ENCODE measurements at regions of chr19 and their contacts with region 1.

Region 1: DNA sequence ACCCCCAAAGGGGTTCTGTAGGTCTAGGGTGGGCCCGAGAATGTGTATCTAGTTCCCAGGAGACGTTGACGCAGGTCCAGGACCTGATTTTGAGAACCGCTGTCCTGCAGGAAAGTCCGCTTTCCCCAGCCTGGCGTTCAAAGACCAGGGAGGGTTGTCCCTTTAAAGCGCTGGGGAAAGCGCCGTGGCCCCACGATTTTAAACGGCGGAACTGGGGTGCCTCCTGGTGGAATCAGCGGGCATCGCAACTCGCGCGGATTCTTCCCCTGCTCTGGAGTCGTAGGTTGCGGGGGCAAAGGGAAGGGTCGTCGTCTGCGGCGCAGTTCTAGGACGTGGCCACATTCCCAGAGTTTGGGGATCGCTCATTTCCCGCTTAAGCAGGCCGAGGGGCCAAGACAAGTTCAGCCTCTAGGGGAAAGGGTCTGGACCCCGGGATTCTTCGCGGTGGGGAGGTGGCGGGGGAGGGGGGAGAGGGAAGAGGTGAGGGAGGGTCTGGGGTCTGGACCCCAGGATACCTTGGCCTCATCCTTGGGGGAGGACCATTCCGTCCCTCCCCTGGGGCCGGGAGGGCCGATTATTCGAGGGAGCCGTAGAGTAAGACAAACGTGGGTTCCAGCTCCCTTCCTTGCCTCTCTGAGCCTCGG is 7.7 kb downstream of the PNMA8B start:
- DNase-seq: peak; percentile 86
- CTCF ChIP-seq: peak; percentile 96

Region 2: DNA sequence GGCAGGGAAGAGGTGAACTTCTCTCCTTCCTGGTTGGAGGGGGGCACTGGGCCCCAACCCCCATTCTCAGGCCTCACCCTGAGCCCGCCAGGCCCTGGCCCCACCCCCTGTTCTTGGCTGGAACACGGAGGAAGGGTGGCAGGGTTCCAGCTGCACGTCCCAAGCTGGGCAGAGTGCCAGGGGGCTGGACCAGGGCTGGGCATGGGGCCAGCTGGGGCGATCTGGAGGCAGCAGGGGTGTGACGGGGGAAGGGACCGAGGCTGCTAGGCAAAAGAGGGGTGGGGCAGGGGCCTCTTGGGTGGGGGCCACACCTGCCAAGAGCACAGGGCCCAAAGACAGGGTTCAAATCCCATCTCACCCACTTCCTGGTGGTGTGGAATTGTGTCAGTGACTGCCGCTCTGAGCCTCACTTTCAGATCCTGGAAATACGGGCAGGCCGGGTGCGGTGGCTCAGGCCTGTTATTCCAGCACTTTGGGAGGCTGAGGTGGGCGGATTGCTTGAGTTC is 188.9 kb before region 1 on chr19:
- in situ Hi-C with region 1: loop called (anchors 25 kb)
- DNase-seq: no peak
- CTCF ChIP-seq: no peak

Region 3: GRCh38 chr19:46404055-46404752 is 83.7 kb before region 1 on chr19:
- in situ Hi-C with region 1: loop called (anchors 5 kb)
- DNase-seq: no peak
- CTCF ChIP-seq: no peak

Measured in GM13977 (cell line).